Activated T-helper 1 cell treated with anti-CD3 and anti-CD28 coated beads, Interleukin-12 subunit alpha, Interleukin-12 subunit beta, Interleukin-2, Interleukin-4 antibody, amounts not matched to agents 30 ng/mL and 10 ng/mL and 1 ng/mL, durations not matched to agents 14 hours and 24 hours and 36 hours (primary cell): ENCODE measurements at regions of chr10 and their contacts with region 1.

Region 1: GRCh38 chr10:16843252-16843870 is 26.1 kb upstream of the RSU1 start:
- DNase-seq: no peak
- H3K4me3 Mint-ChIP-seq: no peak overlapping the region
- H3K27ac Mint-ChIP-seq: no peak overlapping the region
- H3K4me1 Mint-ChIP-seq: no peaks in the 10 kb centered on the region
- H3K27me3 Mint-ChIP-seq: peaks cover 2% of the 10 kb centered on the region

Region 2: GRCh38 chr10:16828114-16828568 is 15.2 kb before region 1 on chr10:
- intact Hi-C with region 1: loop called (anchors 1 kb)
- DNase-seq: peak; percentile 48
- H3K4me3 Mint-ChIP-seq: no peak overlapping the region
- H3K27ac Mint-ChIP-seq: no peak overlapping the region
- H3K4me1 Mint-ChIP-seq: peaks cover 7% of the 10 kb centered on the region
- H3K27me3 Mint-ChIP-seq: peaks cover 6% of the 10 kb centered on the region

Region 3: DNA sequence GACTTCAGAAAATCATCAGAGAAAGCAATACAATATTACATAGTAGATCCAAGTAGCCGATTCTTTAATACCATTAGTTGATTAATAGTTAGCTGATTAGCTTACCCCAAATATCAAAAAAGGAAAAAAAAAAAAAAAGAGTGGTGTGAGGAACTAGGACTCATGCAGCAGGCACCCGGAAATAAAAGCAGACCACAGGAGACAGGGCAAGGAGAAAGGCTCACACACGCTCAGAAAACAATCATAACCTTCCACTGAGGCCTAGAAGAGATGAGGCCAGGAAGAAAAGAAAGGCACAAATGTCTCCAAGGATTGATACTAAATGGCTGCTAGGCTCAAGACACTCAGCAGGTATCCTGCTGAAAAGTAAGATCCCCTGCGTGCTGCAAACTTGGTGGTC is 332.2 kb after region 1 on chr10:
- intact Hi-C with region 1: loop called (anchors 10 kb)
- DNase-seq: no peak
- H3K4me3 Mint-ChIP-seq: no peak overlapping the region
- H3K27ac Mint-ChIP-seq: no peak overlapping the region
- H3K4me1 Mint-ChIP-seq: peaks cover 7% of the 10 kb centered on the region
- H3K27me3 Mint-ChIP-seq: peaks cover 3% of the 10 kb centered on the region

Region 4: DNA sequence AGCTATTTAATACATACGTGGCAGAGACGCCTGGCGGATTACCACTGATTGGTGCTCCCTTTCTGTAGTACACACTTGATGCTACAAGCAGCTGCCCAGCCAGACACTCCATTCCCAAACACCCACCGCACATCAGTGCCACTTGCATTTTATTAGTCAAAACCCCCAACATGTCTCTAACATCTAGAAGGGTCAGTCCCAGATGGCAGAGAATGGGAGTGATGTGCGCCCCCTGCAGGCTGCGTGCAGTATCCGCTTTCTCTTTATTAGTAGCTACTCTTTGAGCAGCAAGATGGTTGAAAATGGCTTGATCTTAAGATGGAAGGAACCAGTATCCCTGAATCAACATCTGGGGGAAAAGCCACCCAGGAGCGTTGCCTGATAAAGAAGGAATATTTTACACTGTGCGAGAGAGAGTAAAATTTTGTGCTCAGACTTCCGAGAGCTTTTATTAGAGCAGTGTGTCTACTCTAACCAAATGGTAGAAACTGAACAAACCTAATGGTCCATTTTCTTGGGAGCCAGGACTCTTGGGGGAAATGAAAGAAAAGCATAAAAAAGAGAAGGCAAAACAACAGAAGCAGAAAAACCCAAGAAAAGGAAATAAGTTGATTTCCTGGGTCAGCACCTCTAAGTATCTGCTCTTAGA is 532.7 kb after region 1 on chr10:
- intact Hi-C with region 1: loop called (anchors 5 kb)
- DNase-seq: no peak
- H3K4me3 Mint-ChIP-seq: no peak overlapping the region
- H3K27ac Mint-ChIP-seq: no peak overlapping the region
- H3K4me1 Mint-ChIP-seq: no peaks in the 10 kb centered on the region
- H3K27me3 Mint-ChIP-seq: peaks cover 5% of the 10 kb centered on the region